HAP-1 (cell line): ENCODE measurements at regions of chr1 and their contacts with region 1.

Region 1: DNA sequence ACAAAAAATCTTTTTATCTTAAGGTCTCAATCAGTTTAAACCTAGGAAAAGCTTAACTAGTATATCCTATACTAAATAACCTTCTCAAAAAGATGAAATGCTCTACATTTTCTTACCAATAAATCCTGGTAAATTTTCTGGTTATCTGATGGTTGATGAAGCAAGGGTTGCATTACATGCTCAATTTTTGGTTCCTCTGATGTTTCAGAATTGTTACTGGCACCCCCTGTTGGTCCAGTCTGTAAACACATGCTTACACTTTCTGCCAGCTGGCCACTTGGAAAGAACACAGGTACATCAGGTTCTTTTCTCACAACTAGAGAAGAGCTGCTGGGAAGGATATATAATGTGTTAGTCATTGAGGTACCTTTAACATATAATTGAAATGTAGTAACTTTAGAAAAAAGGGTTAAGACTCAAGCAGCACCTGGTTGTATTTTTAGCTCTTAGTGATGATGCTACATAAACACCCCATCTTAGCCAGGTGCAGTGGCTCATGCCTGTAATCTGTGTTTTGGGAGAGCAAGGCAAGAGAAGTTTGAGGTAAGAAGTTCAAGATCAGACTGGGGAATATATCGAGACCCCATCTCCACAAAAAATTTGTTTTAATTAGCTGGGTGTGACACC is 30.9 kb upstream of the TAL1 start:
- DNase-seq: peak; percentile 47 to 65
- H3K4me3 ChIP-seq: no peak overlapping the region
- H3K4me1 ChIP-seq: no peaks in the 10 kb centered on the region
- H3K27me3 ChIP-seq: no peaks in the 10 kb centered on the region

Region 2: DNA sequence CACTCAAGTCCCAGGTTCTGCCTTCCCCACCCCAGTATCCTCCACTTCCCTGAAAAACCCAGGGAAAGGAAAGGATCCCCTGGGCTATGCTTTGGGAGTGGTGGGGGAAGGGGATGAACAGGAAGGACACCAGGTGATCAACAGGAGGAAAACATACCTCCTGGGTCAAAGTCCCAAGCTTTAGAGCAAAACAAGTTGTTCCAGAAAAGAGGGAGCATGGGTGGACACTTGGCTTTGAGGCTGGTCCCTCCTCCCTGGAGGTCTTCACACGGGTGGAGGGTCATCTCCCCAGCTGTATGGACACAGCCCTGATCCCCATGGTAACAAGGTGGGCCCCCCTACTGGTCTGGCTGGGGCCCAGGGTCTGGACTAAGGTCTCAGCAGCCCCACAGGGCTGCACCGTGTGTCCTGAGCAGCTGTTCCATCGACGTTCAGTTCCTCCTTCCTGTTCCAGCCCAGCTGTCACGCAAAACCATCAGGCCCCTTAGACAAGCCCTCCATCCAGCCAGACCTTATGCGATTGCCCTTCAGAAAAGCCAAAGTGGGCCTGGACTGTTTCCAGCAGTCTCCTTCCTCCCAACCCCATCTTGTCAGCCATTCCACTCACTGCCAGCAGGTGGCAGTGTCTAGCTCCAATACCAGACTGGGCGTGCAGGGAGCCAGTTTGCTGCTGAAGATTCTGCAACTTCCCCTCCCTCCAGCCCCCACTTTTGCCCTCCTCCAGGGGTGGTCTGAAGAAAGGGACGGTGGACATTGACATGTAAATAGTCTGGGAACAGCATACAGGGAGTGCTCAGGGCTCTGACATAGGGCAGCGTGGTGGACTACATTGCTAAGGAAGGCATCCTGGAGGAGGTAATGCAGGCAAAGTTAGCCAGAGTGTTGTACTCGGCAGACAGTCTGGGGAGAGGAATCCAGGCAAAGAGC is 70.2 kb before region 1 on chr1:
- in situ Hi-C with region 1: loop called (anchors 5 kb)
- DNase-seq: peak; percentile 72 to 87
- H3K4me3 ChIP-seq: no peak overlapping the region
- H3K4me1 ChIP-seq: no peaks in the 10 kb centered on the region
- H3K27me3 ChIP-seq: no peaks in the 10 kb centered on the region

Region 3: DNA sequence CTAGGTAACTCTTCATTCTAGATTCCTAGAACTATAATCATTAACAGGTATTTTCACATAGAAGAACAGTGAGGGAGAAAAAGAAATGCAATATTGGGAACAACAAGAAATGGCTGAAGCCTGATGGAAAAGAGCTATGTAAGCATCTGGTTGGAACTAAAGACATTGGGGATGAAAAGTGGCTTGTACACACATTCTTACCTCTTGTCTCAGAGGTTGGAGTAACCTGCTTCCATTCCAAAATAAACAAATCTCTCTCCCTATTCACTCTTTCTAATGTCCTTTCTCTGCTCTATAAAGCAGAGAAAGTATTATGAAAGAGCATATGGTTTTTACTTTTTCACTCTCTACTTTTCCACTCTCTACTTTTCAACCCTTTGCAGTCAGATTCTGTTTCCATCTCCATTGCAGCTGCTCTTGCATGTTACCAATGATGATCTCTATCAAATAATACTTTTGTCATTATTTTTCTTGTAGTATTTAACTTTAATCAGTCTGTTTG is 108.2 kb after region 1 on chr1:
- in situ Hi-C with region 1: no loop called
- DNase-seq: no peak
- H3K4me3 ChIP-seq: no peak overlapping the region
- H3K4me1 ChIP-seq: no peaks in the 10 kb centered on the region
- H3K27me3 ChIP-seq: no peaks in the 10 kb centered on the region

Region 4: DNA sequence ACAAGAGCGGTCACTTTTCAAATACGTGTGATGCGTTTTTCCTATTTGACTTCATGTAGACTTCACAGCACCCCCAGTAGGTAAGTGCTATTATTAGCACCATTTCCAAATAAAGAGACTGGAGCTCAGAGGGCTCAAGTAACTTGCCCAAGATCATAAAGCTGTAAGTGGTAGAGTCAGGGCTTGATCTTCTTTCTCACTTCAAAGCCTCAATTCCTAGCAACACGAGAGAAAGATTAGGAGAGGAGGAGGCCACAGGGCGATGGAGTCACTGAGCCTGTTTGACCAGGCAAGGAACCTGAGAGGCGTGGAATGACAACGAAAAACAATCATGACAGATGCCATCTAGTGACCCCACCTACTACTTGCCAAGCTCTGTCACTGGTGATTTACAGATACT is 355.9 kb after region 1 on chr1:
- in situ Hi-C with region 1: no loop called
- DNase-seq: no peak
- H3K4me3 ChIP-seq: no peak overlapping the region
- H3K4me1 ChIP-seq: no peaks in the 10 kb centered on the region
- H3K27me3 ChIP-seq: 0 out of 2 replicates have a peak, but pooled peaks cover 6% of the 10 kb centered on the region